MCF 10A (cell line): ENCODE measurements at regions of chr2 and their contacts with region 1.

Region 1: GRCh38 chr2:200811336-200812121 is at the start of gene BZW1:
- DNase-seq: peak; percentile 97
- H3K4me3 Mint-ChIP-seq: peak within 1 kb of the TSS; percentile 99
- H3K27ac Mint-ChIP-seq: peak within 1 kb of the TSS; percentile 98
- H3K4me1 Mint-ChIP-seq: peaks cover 41% of the 10 kb centered on the region
- H3K27me3 Mint-ChIP-seq: no peaks in the 10 kb centered on the region
- CTCF ChIP-seq: no peak
- total RNA-seq, gene BZW1: 353 and 371 TPM in 2 replicates

Region 2: GRCh38 chr2:200756618-200757321 is 54.8 kb before region 1 on chr2:
- CTCF ChIA-PET with region 1: interaction called, 3 read pairs
- POLR2A ChIA-PET with region 1: interaction called, 28 read pairs
- intact Hi-C with region 1: loop called (anchors 1 kb)
- DNase-seq: peak; percentile 89
- H3K4me3 Mint-ChIP-seq: no peak overlapping the region
- H3K27ac Mint-ChIP-seq: peak overlapping the region; percentile 74
- H3K4me1 Mint-ChIP-seq: peaks cover 25% of the 10 kb centered on the region
- H3K27me3 Mint-ChIP-seq: no peaks in the 10 kb centered on the region
- CTCF ChIP-seq: no peak

Region 3: DNA sequence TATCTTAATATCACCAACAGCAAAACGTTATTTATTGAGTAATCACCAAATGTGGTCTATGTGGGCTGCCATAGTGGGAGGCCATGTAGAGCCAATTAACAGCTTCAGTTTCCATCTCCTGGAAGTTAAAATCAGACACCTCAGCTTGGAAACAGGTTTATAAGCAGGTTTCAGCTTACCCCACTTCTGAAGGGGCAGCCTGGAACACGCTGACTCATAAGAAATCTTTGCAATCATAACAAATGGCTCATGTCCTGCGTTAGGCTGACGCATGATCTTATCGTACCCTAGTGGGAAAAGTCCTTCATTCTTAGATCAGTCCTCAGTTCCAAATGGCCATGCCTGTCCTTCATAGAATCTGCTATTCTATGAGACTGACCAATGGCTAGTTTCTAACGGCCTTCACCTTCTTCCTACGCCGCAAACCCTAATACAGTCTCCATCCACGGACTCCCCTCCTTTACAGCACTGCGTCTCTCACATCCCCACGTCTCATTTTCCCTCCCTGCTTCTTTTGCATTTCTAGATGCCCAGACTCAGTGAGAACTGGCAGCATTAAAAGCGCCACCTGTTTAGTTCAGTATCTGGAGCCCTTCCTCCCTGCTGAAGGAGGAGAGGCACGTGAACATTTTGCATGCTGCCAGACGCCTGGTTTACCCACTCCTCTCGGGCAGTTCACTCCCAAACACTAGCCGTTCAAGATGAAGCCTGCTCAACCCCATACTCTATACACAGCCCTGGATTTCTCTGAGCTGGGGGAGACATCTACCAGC is 24.0 kb before region 1 on chr2:
- CTCF ChIA-PET with region 1: interaction called, 5 read pairs
- POLR2A ChIA-PET with region 1: interaction called, 17 read pairs
- intact Hi-C with region 1: loop called (anchors 1 kb)
- DNase-seq: peak; percentile 93
- H3K4me3 Mint-ChIP-seq: peak overlapping the region; percentile 10
- H3K27ac Mint-ChIP-seq: peak overlapping the region; percentile 89
- H3K4me1 Mint-ChIP-seq: peaks cover 19% of the 10 kb centered on the region
- H3K27me3 Mint-ChIP-seq: no peaks in the 10 kb centered on the region
- CTCF ChIP-seq: no peak

Region 4: DNA sequence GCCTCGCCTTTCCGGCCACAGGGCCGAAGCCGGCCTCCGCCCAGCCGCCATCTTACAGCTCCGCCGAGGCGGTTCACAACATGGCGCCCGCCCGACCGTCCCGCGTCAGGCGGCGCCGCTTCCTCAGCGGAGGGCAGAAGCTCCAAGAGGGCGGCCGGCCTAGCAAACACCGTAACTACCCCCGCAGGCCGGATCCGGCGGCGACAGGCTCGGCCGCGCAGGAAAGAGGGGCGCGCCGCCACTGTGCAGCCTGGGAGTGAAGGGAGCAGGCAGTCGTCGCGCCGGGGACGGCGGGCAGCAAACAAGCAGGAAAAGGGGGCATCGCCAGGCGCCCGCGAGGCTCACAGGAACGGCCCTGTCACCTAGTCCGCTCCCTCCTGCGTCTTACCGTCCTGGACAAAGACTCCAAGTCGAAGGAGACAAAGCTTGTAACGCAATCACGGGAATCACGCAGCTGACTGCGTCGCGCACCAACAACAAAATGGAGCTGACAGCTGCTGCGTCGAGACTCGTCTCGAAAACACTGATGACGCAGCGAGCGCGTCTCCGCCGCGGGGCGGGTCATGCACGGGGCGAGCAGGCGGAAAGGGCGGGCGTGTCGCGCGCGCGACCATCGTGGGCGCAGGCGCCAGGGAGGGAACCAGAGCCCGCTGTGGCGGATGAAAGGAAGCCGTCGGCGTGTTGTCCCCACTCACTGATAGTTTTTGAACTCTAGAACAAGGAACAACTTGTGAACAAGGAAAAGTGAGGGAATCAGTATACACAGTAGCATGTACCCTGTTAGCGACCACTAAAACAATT is 52.8 kb after region 1 on chr2 and contains the start of gene CLK1:
- CTCF ChIA-PET with region 1: no interaction called
- POLR2A ChIA-PET with region 1: interaction called, 38 read pairs
- intact Hi-C with region 1: loop called (anchors 5 kb)
- DNase-seq: peak; percentile 91
- H3K4me3 Mint-ChIP-seq: peak within 1 kb of the TSS; percentile 86
- H3K27ac Mint-ChIP-seq: peak within 1 kb of the TSS; percentile 99
- H3K4me1 Mint-ChIP-seq: peaks cover 16% of the 10 kb centered on the region
- H3K27me3 Mint-ChIP-seq: no peaks in the 10 kb centered on the region
- CTCF ChIP-seq: no peak
- total RNA-seq, gene CLK1: 102 and 118 TPM in 2 replicates

Region 5: DNA sequence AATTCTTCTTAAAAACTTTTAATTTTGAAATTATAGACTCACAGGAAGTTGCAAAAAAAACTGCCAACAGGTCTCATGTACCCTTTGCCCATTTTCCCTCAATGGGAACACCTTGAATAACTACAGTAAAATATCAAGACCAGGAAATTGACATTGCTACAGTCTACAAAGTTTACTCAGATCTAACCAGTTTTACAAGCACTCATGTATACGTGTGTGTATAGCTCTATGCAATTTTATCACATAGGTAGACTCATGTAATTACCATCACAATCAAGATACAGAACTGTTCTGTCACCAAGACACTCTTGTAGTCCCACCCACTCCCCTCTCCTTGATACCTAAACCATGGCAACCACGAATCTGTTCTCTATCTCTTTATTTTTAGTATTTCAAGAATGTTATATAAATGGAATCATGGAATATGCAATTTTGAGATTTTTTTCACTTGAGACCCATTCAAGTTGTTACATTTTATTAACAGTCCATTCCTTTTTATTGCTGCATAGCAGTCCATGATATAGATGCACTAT is 253.3 kb after region 1 on chr2:
- CTCF ChIA-PET with region 1: no interaction called
- POLR2A ChIA-PET with region 1: interaction called, 5 read pairs
- intact Hi-C with region 1: loop called (anchors 5 kb)
- DNase-seq: no peak
- H3K4me3 Mint-ChIP-seq: no peak overlapping the region
- H3K27ac Mint-ChIP-seq: no peak overlapping the region
- H3K4me1 Mint-ChIP-seq: peaks cover 14% of the 10 kb centered on the region
- H3K27me3 Mint-ChIP-seq: no peaks in the 10 kb centered on the region
- CTCF ChIP-seq: no peak